Activated CD4-positive, alpha-beta T cell treated with anti-CD3 and anti-CD28 coated beads for 36 hours (primary cell): ENCODE measurements at regions of chr2 and their contacts with region 1.

Region 1: GRCh38 chr2:237700512-237701032 is 73.2 kb downstream of the LRRFIP1 start:
- DNase-seq: peak; percentile 90
- ATAC-seq: peak; percentile 63
- H3K4me3 Mint-ChIP-seq: peak overlapping the region; percentile 70
- H3K27ac Mint-ChIP-seq: peak overlapping the region; percentile 95
- H3K4me1 Mint-ChIP-seq: peaks cover 97% of the 10 kb centered on the region
- H3K27me3 Mint-ChIP-seq: no peaks in the 10 kb centered on the region

Region 2: DNA sequence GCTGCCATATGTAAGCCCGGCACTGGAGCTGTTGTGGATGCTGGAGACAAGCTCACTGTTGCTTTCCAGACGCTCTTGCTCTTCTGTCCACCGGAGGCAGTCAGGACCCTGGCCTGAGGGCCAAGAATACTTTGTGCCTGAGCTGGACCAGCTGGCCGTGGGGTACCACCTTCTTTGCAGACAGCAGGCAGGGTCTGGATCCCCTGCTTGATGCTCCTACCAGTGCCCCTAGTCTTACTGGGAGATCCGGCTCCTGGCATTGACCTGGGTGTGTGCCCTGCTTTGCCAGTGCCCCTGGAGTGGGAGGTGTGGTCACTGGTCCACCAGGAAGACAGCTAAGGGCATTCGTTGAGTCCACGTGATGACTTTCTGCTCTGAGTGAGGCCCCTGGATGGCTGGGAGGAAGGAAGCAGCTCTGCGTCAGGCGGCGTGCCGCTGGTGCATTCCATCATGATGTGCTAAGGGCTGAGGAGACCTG is 13.9 kb before region 1 on chr2:
- CTCF ChIA-PET with region 1: interaction called, 10 read pairs
- POLR2A ChIA-PET with region 1: interaction called, 18 read pairs
- intact Hi-C with region 1: loop called in 1 of 2 experiments (anchors 2 kb)
- DNase-seq: no peak
- ATAC-seq: no peak
- H3K4me3 Mint-ChIP-seq: no peak overlapping the region
- H3K27ac Mint-ChIP-seq: peak overlapping the region; percentile 59
- H3K4me1 Mint-ChIP-seq: peaks cover 49% of the 10 kb centered on the region
- H3K27me3 Mint-ChIP-seq: no peaks in the 10 kb centered on the region

Region 3: GRCh38 chr2:237731663-237732062 is 31.1 kb after region 1 on chr2:
- CTCF ChIA-PET with region 1: interaction called, 5 read pairs
- POLR2A ChIA-PET with region 1: interaction called, 7 read pairs
- intact Hi-C with region 1: loop called (anchors 1 to 2 kb)
- DNase-seq: peak; percentile 77
- ATAC-seq: peak; percentile 98
- H3K4me3 Mint-ChIP-seq: peak overlapping the region; percentile 43
- H3K27ac Mint-ChIP-seq: peak overlapping the region; percentile 96
- H3K4me1 Mint-ChIP-seq: peaks cover 64% of the 10 kb centered on the region
- H3K27me3 Mint-ChIP-seq: no peaks in the 10 kb centered on the region

Region 4: GRCh38 chr2:238299803-238300202 is 599.2 kb after region 1 on chr2:
- CTCF ChIA-PET with region 1: no interaction called
- POLR2A ChIA-PET with region 1: no interaction called
- intact Hi-C with region 1: no loop called
- DNase-seq: no peak
- ATAC-seq: no peak
- H3K4me3 Mint-ChIP-seq: no peak overlapping the region
- H3K27ac Mint-ChIP-seq: no peak overlapping the region
- H3K4me1 Mint-ChIP-seq: no peaks in the 10 kb centered on the region
- H3K27me3 Mint-ChIP-seq: no peaks in the 10 kb centered on the region